SK-N-SH (cell line): ENCODE measurements at regions of chr16 and their contacts with region 1.

Region 1: GRCh38 chr16:23435500-23435899 is 17.5 kb downstream of the COG7 start:
- DNase-seq: peak; percentile 67
- H3K4me3 ChIP-seq: no peak overlapping the region; a peak in 1 of 4 replicates
- H3K27ac ChIP-seq: no peak overlapping the region
- H3K4me1 ChIP-seq: no peaks in the 10 kb centered on the region
- H3K27me3 ChIP-seq: no peaks in the 10 kb centered on the region
- CTCF ChIP-seq: peak; percentile 90
- EP300 ChIP-seq: no peak
- RAD21 ChIP-seq: peak; percentile 66

Region 2: GRCh38 chr16:23141959-23142740 is 293.4 kb before region 1 on chr16:
- CTCF ChIA-PET with region 1: interaction called, 18 read pairs
- POLR2A ChIA-PET with region 1: no interaction called
- DNase-seq: no peak
- H3K4me3 ChIP-seq: no peak overlapping the region
- H3K27ac ChIP-seq: no peak overlapping the region
- H3K4me1 ChIP-seq: peaks cover 19 to 27% of the 10 kb centered on the region in 2 experiments; a peak in 3 of 4 replicates
- H3K27me3 ChIP-seq: no peaks in the 10 kb centered on the region
- CTCF ChIP-seq: no peak
- EP300 ChIP-seq: no peak
- RAD21 ChIP-seq: no peak

Region 3: GRCh38 chr16:23182460-23183309 is 252.8 kb before region 1 on chr16 and contains the start of gene SCNN1G:
- CTCF ChIA-PET with region 1: interaction called, 290 read pairs
- POLR2A ChIA-PET with region 1: no interaction called
- DNase-seq: peak; percentile 95
- H3K4me3 ChIP-seq: peak within 1 kb of the TSS; percentile 40 to 48
- H3K27ac ChIP-seq: no peak within 1 kb of the TSS
- H3K4me1 ChIP-seq: peaks cover 0 to 15% of the 10 kb centered on the region in 2 experiments; a peak in 1 of 4 replicates
- H3K27me3 ChIP-seq: peaks cover 36% of the 10 kb centered on the region
- CTCF ChIP-seq: peak; percentile 71
- EP300 ChIP-seq: no peak
- RAD21 ChIP-seq: peak; percentile 79
- polyA plus RNA-seq, gene SCNN1G: not detected in 2 replicates

Region 4: GRCh38 chr16:23296994-23297393 is 138.5 kb before region 1 on chr16:
- CTCF ChIA-PET with region 1: interaction called, 21 read pairs
- POLR2A ChIA-PET with region 1: no interaction called
- DNase-seq: peak; percentile 55
- H3K4me3 ChIP-seq: no peak overlapping the region
- H3K27ac ChIP-seq: no peak overlapping the region
- H3K4me1 ChIP-seq: no peaks in the 10 kb centered on the region; a peak in 1 of 4 replicates
- H3K27me3 ChIP-seq: peaks cover 10% of the 10 kb centered on the region; the same call in 1 of the 2 replicates
- CTCF ChIP-seq: peak; percentile 32; the same call in 1 of the 2 replicates
- EP300 ChIP-seq: no peak
- RAD21 ChIP-seq: no peak

Region 5: GRCh38 chr16:23408823-23409298 is 26.6 kb before region 1 on chr16:
- CTCF ChIA-PET with region 1: interaction called, 53 read pairs
- POLR2A ChIA-PET with region 1: no interaction called
- DNase-seq: peak; percentile 55
- H3K4me3 ChIP-seq: no peak overlapping the region
- H3K27ac ChIP-seq: no peak overlapping the region
- H3K4me1 ChIP-seq: peaks cover 0 to 4% of the 10 kb centered on the region in 2 experiments; a peak in 1 of 4 replicates
- H3K27me3 ChIP-seq: no peaks in the 10 kb centered on the region
- CTCF ChIP-seq: no peak
- EP300 ChIP-seq: no peak
- RAD21 ChIP-seq: no peak

Region 6: DNA sequence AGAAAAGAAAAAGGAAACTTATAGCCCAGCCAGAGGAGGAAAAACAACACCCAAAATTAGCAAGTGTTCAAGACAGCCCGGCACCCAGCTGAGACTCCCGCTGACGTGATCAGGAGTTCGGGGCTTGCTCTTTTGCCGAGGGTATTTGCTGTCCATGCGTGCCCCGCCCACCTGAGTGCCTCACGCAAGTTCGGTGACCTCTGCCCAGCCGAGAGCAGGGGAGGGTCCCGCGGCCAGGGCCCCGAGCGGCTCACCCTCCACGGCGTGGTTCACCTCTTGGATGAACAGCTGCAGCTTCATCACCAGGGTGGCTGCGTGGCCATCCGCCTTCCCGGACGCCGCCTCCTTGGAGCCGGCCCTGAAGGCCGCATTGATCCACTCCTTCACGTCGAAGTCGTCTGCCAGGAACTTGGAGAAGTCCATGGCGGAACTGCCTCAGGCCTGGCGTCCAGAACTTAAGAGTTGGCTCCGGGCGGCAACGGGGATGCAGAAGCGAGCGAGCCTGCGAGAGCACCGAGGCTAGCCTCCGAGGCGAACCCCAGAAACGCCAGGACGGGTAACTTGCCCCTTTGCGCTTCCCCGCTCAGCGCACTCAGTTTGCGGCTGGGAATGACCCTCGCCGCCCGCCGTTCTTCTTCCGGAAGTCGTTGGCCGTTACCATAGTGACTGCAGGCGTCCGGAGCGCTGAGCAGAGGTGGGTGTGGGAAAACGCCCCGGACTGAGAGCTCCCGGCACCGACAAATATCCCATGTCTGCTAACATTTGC is 17.3 kb after region 1 on chr16 and contains the start of gene COG7:
- CTCF ChIA-PET with region 1: interaction called, 91 read pairs
- POLR2A ChIA-PET with region 1: no interaction called
- DNase-seq: peak; percentile 87
- H3K4me3 ChIP-seq: peak within 1 kb of the TSS; percentile 63 to 85
- H3K27ac ChIP-seq: peak within 1 kb of the TSS; percentile 81 to 84
- H3K4me1 ChIP-seq: peaks cover 2 to 5% of the 10 kb centered on the region in 2 experiments; a peak in 2 of 4 replicates
- H3K27me3 ChIP-seq: no peaks in the 10 kb centered on the region
- CTCF ChIP-seq: no peak
- EP300 ChIP-seq: no peak
- RAD21 ChIP-seq: no peak
- polyA plus RNA-seq, gene COG7: 33.0 and 34.7 TPM in 2 replicates